Head of caudate nucleus (tissue), 42 donors: ENCODE measurements at regions of chr2 and their contacts with region 1.

Region 1: DNA sequence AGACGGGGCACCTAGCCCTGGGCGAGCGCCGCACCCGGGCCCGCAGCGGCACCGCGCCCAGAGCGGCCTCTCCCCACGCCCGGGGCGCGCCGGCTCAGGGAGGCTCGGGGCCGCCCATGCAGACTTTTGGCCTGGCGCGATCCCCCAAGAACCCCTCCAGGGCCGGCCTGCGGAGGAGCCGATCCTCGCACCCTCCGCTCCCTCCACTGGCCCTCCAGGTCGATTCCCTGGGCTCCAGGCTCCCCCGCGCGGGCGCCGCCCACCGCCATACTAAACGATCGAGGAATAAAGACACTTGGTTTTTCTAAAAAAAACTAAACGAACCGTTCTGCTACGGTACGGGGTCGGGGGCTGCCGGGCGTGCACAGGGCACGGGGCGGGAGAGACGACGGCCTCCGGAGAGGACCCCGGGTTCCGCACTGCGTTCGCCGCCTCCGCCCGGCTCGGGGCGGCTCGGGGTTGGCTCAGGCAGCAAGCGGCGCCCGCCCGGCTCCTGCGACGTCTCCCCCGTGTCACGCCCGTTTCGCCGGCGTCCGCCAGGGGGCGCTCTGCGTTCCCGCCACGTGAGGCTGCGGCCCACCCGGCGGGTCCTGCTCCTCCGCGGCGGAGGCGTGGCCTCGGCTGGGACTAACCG is 365 bp upstream of the KHK start:
- DNase-seq: peak; percentile 86 to 99 (median 96)

Region 2: DNA sequence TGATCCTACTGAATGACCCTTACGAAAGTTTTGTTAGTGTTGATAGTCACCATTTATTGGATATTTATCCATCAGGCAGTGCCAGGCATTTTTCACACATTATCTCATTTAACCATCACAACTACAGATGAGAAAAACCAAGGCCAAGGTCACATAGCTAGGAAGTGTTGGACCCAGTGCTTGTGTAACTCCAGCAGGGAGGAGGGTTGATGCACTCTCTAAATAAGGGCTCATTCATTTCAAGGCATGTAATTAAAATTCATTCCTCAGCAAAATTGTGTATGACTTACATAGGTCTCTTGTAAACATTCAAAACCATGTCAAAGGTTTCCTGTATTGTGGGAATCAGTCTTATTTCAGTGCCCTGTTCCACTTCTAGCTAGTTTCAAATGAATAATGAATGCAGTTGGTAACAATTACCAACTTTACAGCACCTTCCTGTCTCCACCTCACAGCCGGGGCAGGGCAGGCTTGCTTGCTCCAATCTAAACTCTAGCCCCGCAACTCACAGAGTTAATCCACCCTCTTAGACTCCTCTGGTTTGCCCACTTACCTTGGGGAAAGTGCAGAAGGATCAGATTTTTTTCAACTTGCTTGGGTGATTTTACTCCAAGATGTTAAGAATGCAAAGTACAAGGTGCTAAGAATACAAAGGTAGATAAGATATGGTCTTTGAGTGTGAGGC is 121.6 kb before region 1 on chr2:
- intact Hi-C with region 1: loop called (anchors 5 kb)
- DNase-seq: no peak

Region 3: GRCh38 chr2:27032495-27033252 is 53.5 kb before region 1 on chr2 and contains the start of gene TMEM214:
- intact Hi-C with region 1: loop called (anchors 10 kb)
- DNase-seq: peak; percentile 72 to 96 (median 91)

Region 4: DNA sequence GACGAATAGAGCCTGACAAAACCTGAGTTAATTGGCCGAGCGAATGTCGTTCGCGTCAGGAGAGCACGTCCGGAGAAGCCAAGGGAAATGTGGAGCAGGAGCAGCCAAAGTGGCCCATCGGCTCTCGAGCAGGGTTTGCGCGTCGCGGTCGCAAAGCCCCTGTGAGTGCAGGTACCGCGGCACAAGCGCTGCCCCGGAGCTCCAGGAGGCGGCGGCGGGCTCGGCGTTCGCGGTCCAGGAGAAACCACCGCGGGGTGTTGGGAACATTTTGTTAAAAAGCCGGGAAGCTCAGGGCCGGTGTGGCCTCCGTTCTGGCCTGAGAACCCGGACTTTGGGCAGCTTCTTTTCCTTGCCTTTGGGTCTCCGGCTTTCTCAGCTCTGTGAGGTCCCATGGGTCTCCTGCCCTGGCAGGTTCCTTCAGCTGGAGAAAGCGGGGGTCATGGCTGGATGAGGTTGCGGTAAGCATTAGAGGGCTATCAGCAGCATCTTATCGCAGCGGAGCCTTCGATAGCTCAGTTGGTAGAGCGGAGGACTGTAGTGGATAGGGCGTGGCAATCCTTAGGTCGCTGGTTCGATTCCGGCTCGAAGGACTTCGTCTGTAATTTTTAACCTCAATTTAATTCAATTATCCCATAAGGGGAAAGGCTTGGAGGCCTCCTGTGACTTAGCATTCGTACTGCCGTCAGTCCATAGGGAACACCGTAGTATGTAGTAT is 35.8 kb before region 1 on chr2:
- intact Hi-C with region 1: loop called (anchors 5 kb)
- DNase-seq: peak; percentile 82 to 99 (median 95)